ENCODE measurements at regions of chr1 and their contacts with region 1.

Region 1: DNA sequence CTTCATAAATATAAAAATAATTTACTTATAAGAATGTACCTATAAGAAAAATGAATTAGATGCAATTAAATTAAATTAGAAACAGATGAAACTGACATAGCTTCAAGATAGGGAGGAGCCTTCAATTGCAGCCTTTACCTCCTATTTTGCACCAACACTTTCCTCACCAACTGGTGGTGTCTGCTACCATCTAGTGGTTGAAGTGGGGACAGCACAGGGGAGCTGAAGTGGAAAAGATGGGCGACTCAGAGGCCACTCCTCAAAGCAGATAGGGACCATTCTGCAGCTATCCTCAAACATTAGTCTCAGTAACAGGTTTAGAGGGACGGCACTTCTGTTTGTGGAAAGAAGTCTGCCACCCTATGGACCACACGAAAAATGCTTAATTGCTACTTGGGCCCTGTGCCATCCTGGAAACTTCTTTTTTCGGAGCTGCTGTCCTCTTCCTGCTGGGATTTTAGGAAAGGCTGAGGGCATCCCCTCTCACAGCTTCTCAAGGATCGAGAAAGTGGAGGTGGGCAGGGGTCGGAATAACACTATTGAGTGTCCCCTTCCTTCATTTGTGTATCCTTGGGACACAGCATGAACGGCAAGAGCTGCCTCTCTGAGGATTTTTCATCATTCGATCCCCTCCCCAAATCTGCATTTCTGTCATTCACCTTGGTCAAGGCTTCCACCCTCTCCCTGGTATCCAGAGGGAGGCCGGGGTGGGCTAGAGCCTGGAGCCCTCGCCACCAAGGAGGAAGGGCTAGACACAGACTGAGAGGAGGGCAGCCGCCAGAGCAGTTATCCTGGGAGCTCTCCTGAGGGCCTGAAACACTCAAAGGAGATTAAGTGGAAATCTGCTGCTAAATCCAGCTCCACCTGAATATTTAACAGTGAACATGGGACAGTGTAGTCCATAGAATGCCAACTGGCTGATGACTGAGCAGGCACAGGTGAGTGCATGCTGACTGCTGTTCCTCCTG is 9.6 kb downstream of the PROK1 start:
- DNase-seq: peak; percentile 89
- H3K4me3 Mint-ChIP-seq: no peak overlapping the region
- H3K27ac Mint-ChIP-seq: no peak overlapping the region
- H3K4me1 Mint-ChIP-seq: no peaks in the 10 kb centered on the region
- H3K27me3 Mint-ChIP-seq: peaks cover 11% of the 10 kb centered on the region

Region 2: DNA sequence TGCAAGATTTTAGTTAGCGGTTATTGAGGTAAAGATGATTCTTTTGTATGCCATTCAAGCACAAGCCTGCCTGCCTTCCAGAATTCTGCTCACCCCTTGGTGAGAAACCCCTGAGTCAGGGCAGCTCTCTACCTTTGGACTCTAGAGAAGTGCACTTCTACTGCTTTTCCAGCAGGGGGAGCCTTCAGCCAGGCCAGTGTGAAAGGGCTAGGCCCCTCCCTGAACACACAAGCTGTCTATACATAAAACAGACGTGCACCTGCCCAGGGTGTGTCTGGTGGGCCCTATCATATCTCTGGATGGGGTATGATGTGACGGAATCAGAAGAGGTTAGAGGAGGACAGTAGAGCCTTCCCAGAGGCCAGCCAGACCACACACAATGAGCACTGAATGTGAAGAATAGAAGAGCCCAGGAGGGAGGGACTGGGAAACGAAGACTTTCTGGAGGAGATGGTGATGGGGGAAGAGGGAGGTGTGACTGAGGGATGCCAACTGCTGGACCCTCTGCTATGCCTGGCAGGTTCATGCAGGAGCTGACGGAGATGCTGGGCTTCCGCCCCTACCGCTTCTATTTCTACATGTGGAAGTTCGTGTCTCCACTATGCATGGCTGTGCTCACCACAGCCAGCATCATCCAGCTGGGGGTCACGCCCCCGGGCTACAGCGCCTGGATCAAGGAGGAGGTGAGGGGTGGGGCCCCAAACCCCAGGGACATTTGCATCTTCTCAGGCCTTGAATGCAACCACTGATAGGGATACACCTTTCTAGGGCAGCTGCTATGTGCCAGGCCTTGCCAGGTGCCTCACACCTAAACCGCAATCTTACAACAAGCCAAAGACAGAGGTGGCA is 263.4 kb before region 1 on chr1:
- CTCF ChIA-PET with region 1: interaction called, 96 read pairs
- DNase-seq: peak; percentile 66
- H3K4me3 Mint-ChIP-seq: no peak overlapping the region
- H3K27ac Mint-ChIP-seq: no peak overlapping the region
- H3K4me1 Mint-ChIP-seq: no peaks in the 10 kb centered on the region
- H3K27me3 Mint-ChIP-seq: no peaks in the 10 kb centered on the region

Region 3: DNA sequence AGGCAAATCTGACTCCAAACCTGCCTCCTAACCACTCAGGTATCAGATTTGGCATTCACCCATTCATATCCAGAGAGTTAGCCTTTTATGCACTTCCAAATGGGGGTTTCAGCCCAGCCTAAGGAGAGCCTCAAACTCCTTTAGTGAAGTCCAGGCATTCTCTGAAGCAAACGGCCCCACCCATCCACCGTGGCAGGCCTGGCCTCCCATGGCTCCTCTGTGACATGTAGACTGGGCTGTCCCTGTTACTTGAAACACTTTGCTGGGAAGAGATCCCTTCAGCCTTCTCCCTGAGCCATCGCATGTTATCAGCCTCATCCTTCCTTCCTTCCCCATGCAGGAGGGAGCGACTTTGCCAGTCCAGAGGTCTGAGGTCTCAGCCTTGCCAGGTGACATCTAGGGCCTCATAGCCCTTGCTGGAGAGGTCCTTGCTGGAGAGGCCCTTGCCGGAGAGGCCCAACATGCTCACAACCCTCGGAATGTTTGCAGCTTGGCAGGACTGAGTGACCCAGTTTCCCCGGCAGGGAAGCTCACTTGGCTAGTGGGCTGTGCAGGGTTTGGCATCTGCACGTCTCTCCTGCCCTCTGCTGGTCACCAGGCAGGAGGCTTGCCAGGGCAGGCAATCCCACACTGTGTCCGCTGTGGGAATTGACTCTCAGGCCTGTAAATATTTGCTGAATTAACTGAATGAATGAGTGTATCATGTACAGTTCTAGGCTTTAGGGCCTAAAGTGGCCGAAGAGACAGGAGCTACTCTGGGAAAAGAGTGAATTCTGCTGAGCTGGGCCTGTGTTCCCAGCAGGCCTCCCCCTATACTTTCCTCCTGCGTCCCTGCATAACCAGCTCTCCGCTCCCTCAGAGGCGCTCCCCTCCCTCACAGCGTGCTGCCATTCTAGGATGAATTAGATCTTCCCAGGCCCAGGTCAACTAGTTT is 148.1 kb before region 1 on chr1:
- CTCF ChIA-PET with region 1: interaction called, 16 read pairs
- DNase-seq: peak; percentile 82
- H3K4me3 Mint-ChIP-seq: no peak overlapping the region
- H3K27ac Mint-ChIP-seq: no peak overlapping the region
- H3K4me1 Mint-ChIP-seq: no peaks in the 10 kb centered on the region
- H3K27me3 Mint-ChIP-seq: no peaks in the 10 kb centered on the region

Region 4: GRCh38 chr1:110407260-110408210 is 53.0 kb before region 1 on chr1 and contains the start of gene LAMTOR5:
- CTCF ChIA-PET with region 1: interaction called, 88 read pairs
- DNase-seq: peak; percentile 96
- H3K4me3 Mint-ChIP-seq: peak within 1 kb of the TSS; percentile 99
- H3K27ac Mint-ChIP-seq: peak within 1 kb of the TSS; percentile 99
- H3K4me1 Mint-ChIP-seq: peaks cover 33% of the 10 kb centered on the region
- H3K27me3 Mint-ChIP-seq: no peaks in the 10 kb centered on the region